A549 (cell line): ENCODE measurements at regions of chr20 and their contacts with region 1.

Region 1: GRCh38 chr20:32779500-32780211 is 17.5 kb downstream of the DNMT3B start:
- DNase-seq: no peak
- ATAC-seq: no peak
- H3K4me3 ChIP-seq: no peak overlapping the region
- H3K27ac ChIP-seq: 0 out of 6 replicates have a peak overlapping the region, but pooled peaks of 1 of the 2 experiments have one; percentile 12
- H3K4me1 ChIP-seq: peaks cover 39% of the 10 kb centered on the region
- CTCF ChIP-seq: no peak
- EP300 ChIP-seq: no peak
- POLR2A ChIP-seq: no peak
- RAD21 ChIP-seq: no peak

Region 2: GRCh38 chr20:32418376-32418775 is 361.3 kb before region 1 on chr20:
- CTCF ChIA-PET with region 1: no interaction called
- POLR2A ChIA-PET with region 1: no interaction called
- DNase-seq: no peak
- ATAC-seq: no peak
- H3K4me3 ChIP-seq: no peak overlapping the region
- H3K27ac ChIP-seq: no peak overlapping the region
- H3K4me1 ChIP-seq: peaks cover 16% of the 10 kb centered on the region; the same call in 2 of the 3 replicates
- CTCF ChIP-seq: no peak
- EP300 ChIP-seq: no peak
- POLR2A ChIP-seq: no peak
- RAD21 ChIP-seq: no peak

Region 3: DNA sequence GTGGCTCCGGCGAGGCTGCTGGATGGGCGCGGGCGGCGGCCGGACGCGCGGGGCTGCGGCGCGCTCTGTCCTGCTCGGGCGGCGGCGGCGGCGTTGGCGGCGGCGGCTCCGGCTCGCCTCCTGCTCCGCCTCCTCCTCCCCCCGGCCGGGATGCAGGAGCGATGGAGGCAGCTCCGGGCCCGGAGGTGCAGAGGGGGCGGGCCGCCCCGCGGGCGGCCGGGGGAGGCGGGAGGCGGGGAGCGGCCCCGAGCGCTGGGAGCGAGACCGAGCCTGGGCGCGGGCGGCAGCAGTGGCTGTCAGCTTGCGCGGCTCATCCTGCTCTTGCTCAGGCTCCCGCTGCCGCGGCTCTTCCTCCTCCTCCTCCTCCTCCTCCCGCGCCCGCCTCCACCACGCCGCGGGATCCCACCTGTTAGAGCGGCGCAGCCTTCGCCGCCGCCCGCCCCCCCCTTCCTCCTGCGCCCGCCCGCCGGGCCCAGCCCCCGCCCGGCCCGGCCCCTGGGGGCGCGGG is 194.6 kb before region 1 on chr20 and contains the start of gene NOL4L:
- CTCF ChIA-PET with region 1: no interaction called
- POLR2A ChIA-PET with region 1: no interaction called
- DNase-seq: no peak
- ATAC-seq: peak; percentile 11 to 36; a peak in 4 of 6 replicates
- H3K4me3 ChIP-seq: peak within 1 kb of the TSS; percentile 61
- H3K27ac ChIP-seq: peak within 1 kb of the TSS; percentile 66 to 92
- H3K4me1 ChIP-seq: peaks cover 11% of the 10 kb centered on the region; the same call in 1 of the 3 replicates
- CTCF ChIP-seq: no peak
- EP300 ChIP-seq: no peak
- POLR2A ChIP-seq: no peak
- RAD21 ChIP-seq: no peak
- polyA plus RNA-seq, gene NOL4L: 9.5 and 10.2 TPM in 2 replicates

Region 4: DNA sequence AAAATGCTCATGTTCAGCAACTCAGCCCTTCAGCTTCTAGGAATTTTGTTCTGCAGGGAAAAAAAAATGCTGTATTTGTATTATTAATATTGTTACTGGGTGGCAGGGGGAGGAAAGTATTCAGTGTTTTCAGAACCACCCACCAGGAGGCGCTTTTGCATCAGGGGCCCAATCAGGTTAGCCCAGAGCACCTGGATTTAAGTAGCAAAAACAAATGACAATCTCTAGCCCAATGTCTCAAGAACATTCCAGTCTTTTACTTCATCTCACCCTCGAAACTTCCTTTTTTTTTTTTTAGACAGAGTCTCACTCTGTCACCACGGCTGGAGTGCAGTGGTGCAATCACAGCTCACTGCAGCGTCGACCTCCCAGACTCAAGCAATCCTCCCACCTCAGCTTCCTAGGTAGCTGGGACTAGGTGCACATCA is 105.3 kb before region 1 on chr20:
- CTCF ChIA-PET with region 1: interaction called, 396 read pairs
- POLR2A ChIA-PET with region 1: interaction called, 3 read pairs
- DNase-seq: peak; percentile 66 to 80
- ATAC-seq: peak; percentile 74 to 87
- H3K4me3 ChIP-seq: no peak overlapping the region
- H3K27ac ChIP-seq: no peak overlapping the region
- H3K4me1 ChIP-seq: peaks cover 17% of the 10 kb centered on the region; the same call in 2 of the 3 replicates
- CTCF ChIP-seq: peak; percentile 93
- EP300 ChIP-seq: no peak
- POLR2A ChIP-seq: no peak
- RAD21 ChIP-seq: peak; percentile 95 to 96

Region 5: DNA sequence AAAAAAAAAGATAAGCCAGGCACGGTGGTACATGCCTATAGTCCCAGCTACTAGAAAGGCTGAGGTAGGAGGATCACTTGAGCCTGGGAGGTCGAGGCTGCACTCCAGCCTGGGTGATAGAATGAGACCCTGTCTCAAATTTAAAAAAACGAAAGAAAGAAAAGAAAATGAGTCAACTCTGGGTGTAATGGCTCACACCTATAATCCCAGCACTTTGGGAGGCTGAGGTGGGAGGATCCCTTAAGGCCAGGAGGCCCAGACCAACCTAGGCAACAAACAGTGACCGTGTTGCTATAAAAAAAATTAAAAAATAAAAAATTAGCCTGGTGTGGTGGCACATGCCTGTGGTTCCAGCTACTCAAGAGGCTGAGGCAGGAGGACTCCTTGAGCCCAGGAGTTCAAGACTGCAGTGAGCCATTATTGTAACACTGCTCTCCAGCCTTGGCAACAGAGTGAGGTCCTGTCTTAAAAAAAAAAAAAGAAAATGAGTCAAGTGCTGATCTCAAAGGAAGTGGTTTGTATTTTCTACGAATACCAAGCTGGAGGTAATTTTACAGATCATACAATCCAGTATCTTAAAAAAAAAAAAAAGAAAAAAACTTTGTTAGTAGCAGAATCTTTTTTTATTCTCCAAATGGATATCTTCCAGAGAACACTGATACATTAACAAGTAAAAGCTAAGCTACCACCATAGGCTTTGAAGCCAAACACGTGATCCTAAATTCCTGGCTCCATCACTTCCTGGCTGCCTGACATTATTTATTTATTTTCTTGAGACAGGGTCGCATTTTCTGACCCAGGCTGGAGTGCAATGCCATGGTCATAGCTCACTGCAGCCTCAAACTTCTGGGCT is 42.1 kb before region 1 on chr20:
- CTCF ChIA-PET with region 1: interaction called, 21 read pairs
- POLR2A ChIA-PET with region 1: no interaction called
- DNase-seq: no peak
- ATAC-seq: no peak
- H3K4me3 ChIP-seq: no peak overlapping the region
- H3K27ac ChIP-seq: peak overlapping the region; percentile 49 to 51
- H3K4me1 ChIP-seq: peaks cover 37% of the 10 kb centered on the region
- CTCF ChIP-seq: no peak
- EP300 ChIP-seq: no peak
- POLR2A ChIP-seq: no peak
- RAD21 ChIP-seq: no peak

Region 6: DNA sequence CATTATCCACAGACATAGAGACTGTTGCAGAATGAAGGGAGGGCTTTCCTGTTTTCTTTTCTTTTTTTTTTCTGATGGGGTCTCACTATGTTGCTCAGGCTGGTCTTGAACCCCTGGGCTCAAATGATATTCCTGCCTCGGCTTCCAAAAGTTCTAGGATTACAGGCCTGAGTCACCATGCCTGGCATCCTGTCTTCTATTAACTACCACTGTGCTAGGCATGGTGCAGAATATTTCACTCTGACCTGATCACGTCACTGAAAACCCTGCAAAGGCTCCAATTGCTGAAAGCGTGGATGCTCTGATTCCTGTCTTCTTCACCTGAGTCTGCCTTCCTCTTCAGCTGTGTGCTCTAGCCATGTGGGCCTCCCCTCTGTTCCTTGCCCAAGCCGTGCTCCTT is 25.9 kb before region 1 on chr20:
- CTCF ChIA-PET with region 1: interaction called, 21 read pairs
- POLR2A ChIA-PET with region 1: no interaction called
- DNase-seq: no peak
- ATAC-seq: peak in 1 of 2 experiments; percentile 55; a peak in 3 of 6 replicates
- H3K4me3 ChIP-seq: no peak overlapping the region
- H3K27ac ChIP-seq: peak overlapping the region in 1 of 2 experiments; percentile 67; a peak in 3 of 6 replicates
- H3K4me1 ChIP-seq: peaks cover 31% of the 10 kb centered on the region
- CTCF ChIP-seq: no peak
- EP300 ChIP-seq: no peak
- POLR2A ChIP-seq: no peak
- RAD21 ChIP-seq: no peak

Region 7: GRCh38 chr20:32789896-32790750 is 10.5 kb after region 1 on chr20:
- CTCF ChIA-PET with region 1: interaction called, 82 read pairs
- POLR2A ChIA-PET with region 1: no interaction called
- DNase-seq: peak; percentile 71 to 92
- ATAC-seq: peak; percentile 96
- H3K4me3 ChIP-seq: no peak overlapping the region
- H3K27ac ChIP-seq: no peak overlapping the region
- H3K4me1 ChIP-seq: no peaks in the 10 kb centered on the region
- CTCF ChIP-seq: peak; percentile 82
- EP300 ChIP-seq: no peak
- POLR2A ChIP-seq: no peak
- RAD21 ChIP-seq: peak; percentile 66 to 83

Region 8: DNA sequence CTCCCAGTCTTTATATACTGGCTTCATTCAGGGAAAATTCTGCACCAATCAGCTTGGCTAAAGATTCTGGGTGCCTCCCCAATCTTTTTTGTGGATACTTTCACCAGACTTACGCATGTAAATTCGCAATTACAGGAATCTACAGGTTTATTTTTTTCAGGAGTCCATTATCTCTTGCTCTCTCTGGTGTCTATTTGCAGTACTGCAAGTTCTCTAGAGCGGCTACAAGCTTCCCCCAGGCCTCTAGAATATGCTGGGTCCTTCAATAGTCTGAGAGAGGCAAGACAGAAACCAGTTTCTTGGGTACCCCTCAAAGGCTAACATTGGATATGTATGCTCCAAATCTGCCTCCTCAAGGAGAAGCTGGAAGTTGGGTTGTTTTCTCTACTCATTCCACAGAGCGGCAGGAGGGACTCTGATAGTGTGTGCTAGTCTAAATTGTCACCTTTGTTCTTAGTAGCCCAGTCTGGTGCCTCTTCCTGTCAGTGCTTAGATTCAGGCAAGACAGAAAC is 166.1 kb after region 1 on chr20:
- CTCF ChIA-PET with region 1: no interaction called
- POLR2A ChIA-PET with region 1: no interaction called
- DNase-seq: peak in 1 of 2 experiments; percentile 23
- ATAC-seq: peak; percentile 72 to 78; a peak in 5 of 6 replicates
- H3K4me3 ChIP-seq: no peak overlapping the region
- H3K27ac ChIP-seq: no peak overlapping the region
- H3K4me1 ChIP-seq: no peaks in the 10 kb centered on the region
- CTCF ChIP-seq: peak; percentile 37; the same call in 2 of the 3 replicates
- EP300 ChIP-seq: no peak
- POLR2A ChIP-seq: no peak
- RAD21 ChIP-seq: peak; percentile 27 to 32; a peak in 3 of 5 replicates

Region 9: DNA sequence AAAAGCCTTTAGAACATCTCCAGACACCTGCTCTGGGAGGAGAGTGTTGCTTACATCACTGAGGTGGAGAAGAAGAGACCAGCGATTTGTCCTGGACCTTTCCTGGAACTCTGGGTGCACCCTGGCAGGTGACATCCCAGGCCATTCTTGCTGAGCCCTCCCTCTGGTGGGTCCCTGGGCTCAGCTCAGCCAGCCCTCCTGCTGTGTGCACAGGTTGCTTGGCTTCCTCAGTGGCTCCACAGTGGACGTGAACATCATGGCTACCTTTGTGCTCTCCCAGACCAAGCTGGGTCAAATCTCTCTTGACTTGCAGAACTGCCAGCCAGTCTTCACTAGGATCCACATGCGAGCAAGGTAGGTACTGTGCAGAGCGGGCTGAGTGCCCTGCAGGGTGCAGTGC is 368.4 kb after region 1 on chr20:
- CTCF ChIA-PET with region 1: no interaction called
- POLR2A ChIA-PET with region 1: no interaction called
- DNase-seq: no peak
- ATAC-seq: no peak
- H3K4me3 ChIP-seq: no peak overlapping the region
- H3K27ac ChIP-seq: no peak overlapping the region
- H3K4me1 ChIP-seq: no peaks in the 10 kb centered on the region
- CTCF ChIP-seq: no peak
- EP300 ChIP-seq: no peak
- POLR2A ChIP-seq: no peak
- RAD21 ChIP-seq: no peak